ENCODE measurements at regions of chr20 and their contacts with region 1.

Region 1: GRCh38 chr20:35146920-35147574 is at the start of gene EDEM2:
- DNase-seq: peak; percentile 95
- H3K4me3 Mint-ChIP-seq: peak within 1 kb of the TSS; percentile 99
- H3K27ac Mint-ChIP-seq: peak within 1 kb of the TSS; percentile 91
- H3K4me1 Mint-ChIP-seq: peaks cover 33% of the 10 kb centered on the region
- H3K27me3 Mint-ChIP-seq: no peaks in the 10 kb centered on the region
- total RNA-seq, gene EDEM2: 29.7 to 30.5 TPM

Region 2: DNA sequence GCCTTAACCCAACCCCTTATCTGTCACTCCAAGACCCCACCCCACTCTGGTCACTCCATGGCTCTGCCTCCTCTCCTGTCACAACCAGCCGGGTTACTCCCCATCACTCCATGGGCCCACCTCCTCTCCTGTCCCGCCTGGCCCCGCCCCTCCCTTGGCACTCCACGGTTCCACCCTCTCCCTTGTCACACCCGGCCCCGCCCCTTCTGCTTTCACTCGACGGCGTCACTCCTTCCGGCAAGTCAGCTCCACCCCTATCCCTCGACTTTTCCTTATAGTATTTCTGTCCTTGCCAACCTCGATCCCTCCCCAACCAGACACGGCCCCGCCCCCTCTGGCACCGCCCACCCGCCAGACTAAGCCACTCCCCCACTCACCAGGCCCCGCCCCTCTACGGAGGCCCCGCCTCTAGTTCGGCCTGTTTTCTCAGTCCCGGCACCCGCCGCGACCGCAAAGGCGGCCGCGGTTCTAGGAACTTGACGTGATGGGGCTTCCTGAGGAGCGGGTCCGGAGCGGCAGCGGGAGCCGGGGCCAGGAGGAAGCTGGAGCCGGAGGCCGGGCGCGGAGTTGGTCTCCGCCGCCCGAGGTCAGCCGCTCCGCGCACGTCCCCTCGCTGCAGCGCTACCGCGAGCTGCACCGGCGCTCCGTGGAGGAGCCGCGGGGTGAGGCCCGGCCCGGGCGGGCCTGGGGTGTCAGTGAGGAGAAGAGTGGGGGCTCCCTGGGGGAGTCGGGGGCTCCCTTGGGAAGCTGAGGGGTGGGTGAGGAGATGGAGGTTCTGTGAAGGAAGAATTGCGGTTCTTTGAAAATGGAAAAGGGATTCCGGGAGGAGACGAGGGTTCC is 270.7 kb before region 1 on chr20 and contains the start of gene ACSS2:
- CTCF ChIA-PET with region 1: interaction called, 10 read pairs
- POLR2A ChIA-PET with region 1: interaction called, 4 read pairs
- DNase-seq: peak; percentile 99
- H3K4me3 Mint-ChIP-seq: peak within 1 kb of the TSS; percentile 93
- H3K27ac Mint-ChIP-seq: peak within 1 kb of the TSS; percentile 77
- H3K4me1 Mint-ChIP-seq: peaks cover 69% of the 10 kb centered on the region
- H3K27me3 Mint-ChIP-seq: peaks cover 2% of the 10 kb centered on the region
- total RNA-seq, gene ACSS2: 43.5 to 47.5 TPM

Region 3: DNA sequence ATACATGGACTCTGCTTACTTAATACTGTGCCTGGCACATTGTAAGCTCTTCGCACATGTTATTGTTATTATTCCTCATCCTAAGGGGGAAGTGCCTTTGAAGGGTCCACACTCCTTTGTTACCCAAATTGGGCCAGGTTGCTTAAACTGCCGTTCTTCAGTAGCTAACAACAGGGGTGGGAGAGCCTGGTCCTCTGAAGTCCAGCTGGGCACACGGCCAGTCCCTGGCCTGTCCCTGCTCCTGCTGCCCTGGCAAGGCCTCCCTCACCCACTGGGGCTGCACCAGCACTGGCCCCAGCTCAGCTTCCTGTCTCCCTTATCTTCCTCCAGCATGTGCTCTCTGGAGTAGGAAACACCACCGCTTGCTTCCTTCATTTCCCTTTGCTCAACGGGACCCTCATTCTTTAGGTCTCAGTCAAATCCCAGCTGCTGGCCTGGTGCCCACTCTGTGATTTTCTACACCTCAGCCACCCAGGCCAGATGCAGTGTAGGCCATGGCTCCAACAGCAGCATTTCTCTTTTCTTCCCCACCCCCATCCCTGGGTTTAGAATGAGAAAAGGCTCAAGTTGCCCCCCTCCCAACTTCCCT is 19.3 kb after region 1 on chr20:
- CTCF ChIA-PET with region 1: interaction called, 10 read pairs
- POLR2A ChIA-PET with region 1: interaction called, 29 read pairs
- DNase-seq: no peak
- H3K4me3 Mint-ChIP-seq: no peak overlapping the region
- H3K27ac Mint-ChIP-seq: no peak overlapping the region
- H3K4me1 Mint-ChIP-seq: peaks cover 10% of the 10 kb centered on the region
- H3K27me3 Mint-ChIP-seq: peaks cover 12% of the 10 kb centered on the region

Region 4: DNA sequence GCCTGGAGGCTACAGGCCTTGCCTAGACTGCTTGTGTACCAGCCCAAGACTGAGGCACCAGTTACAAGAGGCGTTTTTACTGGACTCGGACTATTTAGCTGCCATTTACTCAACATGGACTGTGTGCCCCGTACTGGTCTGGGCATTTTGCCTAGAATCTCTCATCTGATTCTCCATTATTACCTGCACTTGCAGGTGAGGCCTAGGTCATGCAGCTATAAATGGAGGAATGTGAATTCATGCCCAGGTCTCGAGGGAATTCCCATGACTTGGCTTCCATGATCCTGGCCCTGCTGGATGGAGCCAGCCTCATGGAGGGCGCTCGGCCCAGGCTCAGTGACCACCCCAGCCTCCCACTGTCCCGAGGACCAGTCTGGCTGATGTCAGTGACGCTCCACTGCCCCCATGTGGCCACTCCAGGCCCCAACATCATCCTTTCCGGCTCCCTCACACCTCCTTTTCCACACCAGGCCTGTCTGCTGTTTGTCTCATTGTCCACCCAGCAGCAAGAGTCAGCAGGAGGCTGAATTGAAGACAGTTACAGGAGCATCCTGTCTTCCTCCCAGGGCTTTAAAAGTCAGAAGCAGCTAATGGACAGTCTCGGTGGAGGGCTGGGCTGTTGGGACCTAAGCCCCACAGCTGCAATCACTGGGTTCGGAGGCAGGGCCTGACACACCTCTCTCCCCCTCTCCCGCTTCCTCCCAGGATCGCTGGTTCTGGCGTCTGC is 122.2 kb after region 1 on chr20:
- CTCF ChIA-PET with region 1: interaction called, 38 read pairs
- POLR2A ChIA-PET with region 1: interaction called, 7 read pairs
- DNase-seq: peak; percentile 62
- H3K4me3 Mint-ChIP-seq: no peak overlapping the region
- H3K27ac Mint-ChIP-seq: no peak overlapping the region
- H3K4me1 Mint-ChIP-seq: peaks cover 4% of the 10 kb centered on the region
- H3K27me3 Mint-ChIP-seq: no peaks in the 10 kb centered on the region

Region 5: DNA sequence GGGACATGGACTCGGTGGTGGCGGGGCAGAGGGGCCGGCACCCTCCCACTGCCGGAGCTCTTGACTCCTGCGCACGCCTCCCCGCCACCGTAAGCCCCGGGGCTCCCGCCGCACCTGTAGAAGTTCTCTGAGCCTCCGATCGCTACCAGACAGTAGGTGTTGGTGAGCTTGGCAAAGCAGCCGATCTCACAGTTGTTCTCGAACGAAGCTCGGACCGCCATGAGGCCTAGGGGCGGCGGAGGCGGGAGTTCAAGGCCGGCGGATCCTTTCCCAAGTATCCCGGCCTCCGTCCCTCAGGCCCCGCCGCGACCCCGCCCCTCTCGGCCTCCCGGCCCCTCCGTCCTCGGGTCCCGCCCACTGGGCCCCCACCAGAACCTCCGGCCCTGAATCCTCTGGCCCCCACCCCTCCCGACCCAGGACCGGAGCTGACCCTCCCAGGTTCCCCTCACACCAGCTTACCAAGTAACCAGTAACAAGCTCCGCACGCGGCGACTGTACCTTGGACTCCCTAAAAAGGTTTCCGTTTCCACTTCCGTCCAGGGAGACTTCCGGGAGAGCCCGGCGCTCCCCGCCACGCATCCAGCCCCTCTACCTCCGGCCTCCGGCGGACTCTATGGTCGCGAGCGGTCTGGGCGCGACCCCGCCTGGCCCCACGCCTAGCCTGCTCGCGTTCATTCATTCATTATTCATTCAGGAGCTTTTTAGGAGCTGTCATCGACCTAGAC is 137.4 kb after region 1 on chr20 and contains the start of gene EIF6:
- CTCF ChIA-PET with region 1: interaction called, 3 read pairs
- POLR2A ChIA-PET with region 1: interaction called, 13 read pairs
- DNase-seq: peak; percentile 79
- H3K4me3 Mint-ChIP-seq: peak within 1 kb of the TSS; percentile 91
- H3K27ac Mint-ChIP-seq: peak within 1 kb of the TSS; percentile 89
- H3K4me1 Mint-ChIP-seq: peaks cover 36% of the 10 kb centered on the region
- H3K27me3 Mint-ChIP-seq: no peaks in the 10 kb centered on the region
- total RNA-seq, gene EIF6: 86.1 to 91.3 TPM